ENCODE measurements at regions of chr2 and their contacts with region 1.

Region 1: GRCh38 chr2:38602732-38603401 is at the start of gene HNRNPLL:
- DNase-seq: peak; percentile 97
- ATAC-seq: peak; percentile 88
- H3K4me3 Mint-ChIP-seq: peak within 1 kb of the TSS; percentile 82
- H3K27ac Mint-ChIP-seq: peak within 1 kb of the TSS; percentile 88
- H3K4me1 Mint-ChIP-seq: peaks cover 44% of the 10 kb centered on the region
- H3K27me3 Mint-ChIP-seq: no peaks in the 10 kb centered on the region
- CTCF ChIP-seq: no peak
- total RNA-seq, gene HNRNPLL: 54.9 to 55.3 TPM

Region 2: GRCh38 chr2:38535744-38536506 is 66.9 kb before region 1 on chr2:
- CTCF ChIA-PET with region 1: interaction called, 13 read pairs
- POLR2A ChIA-PET with region 1: interaction called, 3 read pairs
- intact Hi-C with region 1: no loop called
- DNase-seq: peak; percentile 87
- ATAC-seq: peak; percentile 96
- H3K4me3 Mint-ChIP-seq: peak overlapping the region; percentile 50
- H3K27ac Mint-ChIP-seq: no peak overlapping the region
- H3K4me1 Mint-ChIP-seq: no peaks in the 10 kb centered on the region
- H3K27me3 Mint-ChIP-seq: peaks cover 3% of the 10 kb centered on the region
- CTCF ChIP-seq: peak; percentile 96

Region 3: DNA sequence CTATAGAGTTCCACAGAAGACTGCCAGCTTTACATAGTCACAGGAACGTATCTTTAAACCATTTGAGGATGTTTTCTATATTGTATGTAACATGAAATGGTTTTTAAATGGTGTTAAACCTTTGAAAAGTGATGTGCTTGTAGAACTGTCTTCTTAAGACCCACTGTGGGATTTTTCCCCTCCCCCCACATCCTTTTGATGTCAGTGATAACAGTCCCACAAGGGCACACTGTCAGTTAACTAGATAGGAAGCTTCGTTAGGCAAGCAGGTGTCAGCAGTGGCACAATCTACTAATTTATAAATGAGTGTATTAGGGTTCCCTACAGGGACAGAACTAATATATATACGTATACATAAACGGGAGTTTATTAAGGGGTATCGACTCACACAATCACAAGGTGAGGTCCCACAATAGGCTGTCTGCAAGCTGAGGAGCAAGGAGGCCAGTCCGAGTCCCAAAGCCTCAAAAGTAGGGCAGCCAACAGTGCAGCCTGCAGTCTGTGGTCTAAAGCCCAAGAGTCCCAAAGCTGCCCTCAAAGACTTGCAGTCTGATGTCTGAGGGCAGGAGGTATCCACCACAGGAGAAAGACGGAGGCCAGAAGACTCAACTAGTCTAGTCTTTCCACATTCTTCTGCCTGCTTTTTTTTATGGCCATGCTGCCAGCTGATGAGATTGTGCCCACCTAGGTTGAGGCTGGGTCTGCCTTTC is 23.6 kb after region 1 on chr2:
- CTCF ChIA-PET with region 1: interaction called, 11 read pairs
- POLR2A ChIA-PET with region 1: interaction called, 4 read pairs
- intact Hi-C with region 1: no loop called
- DNase-seq: peak; percentile 53
- ATAC-seq: peak; percentile 58
- H3K4me3 Mint-ChIP-seq: no peak overlapping the region
- H3K27ac Mint-ChIP-seq: peak overlapping the region; percentile 24
- H3K4me1 Mint-ChIP-seq: peaks cover 15% of the 10 kb centered on the region
- H3K27me3 Mint-ChIP-seq: no peaks in the 10 kb centered on the region
- CTCF ChIP-seq: no peak

Region 4: DNA sequence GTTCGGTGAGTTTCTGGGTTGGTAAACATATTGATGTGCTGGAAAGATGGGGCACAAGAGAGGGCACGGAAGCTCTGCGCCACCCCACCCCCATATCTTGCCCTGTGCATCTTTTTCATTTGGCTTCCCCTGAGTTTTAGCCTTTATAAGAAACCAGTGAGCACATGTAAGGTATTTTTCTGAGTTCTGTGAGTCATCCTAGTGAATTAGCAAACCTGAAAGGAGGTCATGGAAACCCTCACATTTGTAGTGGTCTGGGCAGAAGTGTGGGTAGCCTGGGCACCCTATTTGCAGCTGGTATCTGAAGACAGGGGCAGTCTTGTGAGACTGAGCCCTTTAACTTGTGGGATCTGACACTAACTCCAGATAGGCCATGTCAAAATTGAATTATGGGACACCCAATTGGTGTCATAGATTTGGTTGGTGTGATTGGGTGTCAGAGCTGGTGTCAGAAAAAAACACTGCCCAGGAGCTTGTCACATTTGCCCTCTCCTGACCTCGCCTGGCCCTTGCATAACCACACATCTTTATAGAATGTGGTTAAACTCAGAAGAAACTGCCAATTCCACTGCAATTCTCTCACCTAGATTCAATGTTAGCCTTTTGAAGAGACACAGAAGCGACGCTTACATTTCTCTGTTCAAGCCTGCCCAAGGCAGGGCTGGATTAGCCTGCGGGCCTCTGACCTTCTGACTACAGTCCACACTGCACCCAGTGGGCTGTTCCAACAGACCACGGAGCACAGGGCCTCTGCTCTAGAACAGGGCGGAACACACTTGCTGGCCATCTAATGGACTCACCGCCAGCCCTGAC is 51.1 kb after region 1 on chr2:
- CTCF ChIA-PET with region 1: interaction called, 20 read pairs
- POLR2A ChIA-PET with region 1: interaction called, 49 read pairs
- intact Hi-C with region 1: loop called (anchors 2 kb)
- DNase-seq: peak; percentile 93
- ATAC-seq: peak; percentile 83
- H3K4me3 Mint-ChIP-seq: peak overlapping the region; percentile 52
- H3K27ac Mint-ChIP-seq: peak overlapping the region; percentile 88
- H3K4me1 Mint-ChIP-seq: peaks cover 49% of the 10 kb centered on the region
- H3K27me3 Mint-ChIP-seq: no peaks in the 10 kb centered on the region
- CTCF ChIP-seq: no peak

Region 5: GRCh38 chr2:38682008-38682575 is 79.2 kb after region 1 on chr2:
- CTCF ChIA-PET with region 1: interaction called, 13 read pairs
- POLR2A ChIA-PET with region 1: interaction called, 5 read pairs
- intact Hi-C with region 1: no loop called
- DNase-seq: no peak
- ATAC-seq: peak; percentile 60
- H3K4me3 Mint-ChIP-seq: peak overlapping the region; percentile 22
- H3K27ac Mint-ChIP-seq: peak overlapping the region; percentile 75
- H3K4me1 Mint-ChIP-seq: peaks cover 37% of the 10 kb centered on the region
- H3K27me3 Mint-ChIP-seq: no peaks in the 10 kb centered on the region
- CTCF ChIP-seq: no peak

Region 6: GRCh38 chr2:38720613-38721241 is 117.9 kb after region 1 on chr2:
- CTCF ChIA-PET with region 1: interaction called, 26 read pairs
- POLR2A ChIA-PET with region 1: interaction called, 7 read pairs
- intact Hi-C with region 1: loop called (anchors 5 kb)
- DNase-seq: peak; percentile 42
- ATAC-seq: no peak
- H3K4me3 Mint-ChIP-seq: peak overlapping the region; percentile 39
- H3K27ac Mint-ChIP-seq: peak overlapping the region; percentile 92
- H3K4me1 Mint-ChIP-seq: peaks cover 62% of the 10 kb centered on the region
- H3K27me3 Mint-ChIP-seq: no peaks in the 10 kb centered on the region
- CTCF ChIP-seq: no peak

Region 7: DNA sequence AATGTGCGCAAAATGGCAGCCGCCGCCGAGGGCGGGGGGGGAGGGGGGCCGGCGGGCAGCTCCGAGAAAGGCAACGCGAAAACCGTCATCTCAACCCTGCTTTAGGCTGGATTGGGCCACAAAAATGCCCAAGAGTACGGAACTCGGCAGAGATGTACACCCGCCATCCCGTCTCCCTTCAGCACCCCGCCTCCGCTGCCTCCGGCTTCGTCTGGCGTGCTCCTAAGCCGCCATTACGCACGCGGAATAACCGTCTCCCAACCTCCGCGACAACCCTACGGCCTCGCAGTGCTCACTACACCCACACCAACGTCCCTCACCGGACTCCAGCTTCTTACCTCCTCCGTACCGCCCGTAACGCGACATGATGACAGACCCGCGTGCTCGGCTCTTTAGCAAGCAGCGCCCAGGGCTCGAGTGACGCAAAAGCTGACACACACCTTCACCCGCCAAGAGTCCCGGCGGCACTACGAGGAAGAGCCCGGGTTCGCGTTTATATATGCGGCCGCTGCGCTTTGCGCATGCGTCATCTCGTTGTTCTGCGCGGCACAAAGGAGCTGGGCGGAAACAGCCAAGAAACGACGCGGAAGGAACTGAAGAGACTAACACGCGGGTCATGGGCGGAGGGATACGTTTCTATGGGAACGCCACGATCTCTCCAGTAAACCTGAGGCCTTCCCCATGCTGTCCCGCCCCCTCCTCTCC is 148.2 kb after region 1 on chr2 and contains the start of gene SRSF7:
- CTCF ChIA-PET with region 1: interaction called, 4 read pairs
- POLR2A ChIA-PET with region 1: interaction called, 209 read pairs
- intact Hi-C with region 1: no loop called
- DNase-seq: peak; percentile 98
- ATAC-seq: peak; percentile 81
- H3K4me3 Mint-ChIP-seq: peak within 1 kb of the TSS; percentile 95
- H3K27ac Mint-ChIP-seq: peak within 1 kb of the TSS; percentile 100
- H3K4me1 Mint-ChIP-seq: peaks cover 44% of the 10 kb centered on the region
- H3K27me3 Mint-ChIP-seq: peaks cover 3% of the 10 kb centered on the region
- CTCF ChIP-seq: no peak
- total RNA-seq, gene SRSF7: 320 to 333 TPM

Region 8: GRCh38 chr2:38886063-38886462 is 283.2 kb after region 1 on chr2:
- CTCF ChIA-PET with region 1: no interaction called
- POLR2A ChIA-PET with region 1: no interaction called
- intact Hi-C with region 1: no loop called
- DNase-seq: no peak
- ATAC-seq: no peak
- H3K4me3 Mint-ChIP-seq: no peak overlapping the region
- H3K27ac Mint-ChIP-seq: no peak overlapping the region
- H3K4me1 Mint-ChIP-seq: no peaks in the 10 kb centered on the region
- H3K27me3 Mint-ChIP-seq: no peaks in the 10 kb centered on the region
- CTCF ChIP-seq: no peak